ENCODE measurements at regions of chr2 and their contacts with region 1.

Region 1: GRCh38 chr2:64052468-64053241 is 33.4 kb upstream of the VPS54 start:
- DNase-seq: no peak
- ATAC-seq: no peak
- H3K4me3 ChIP-seq: no peak overlapping the region
- H3K27ac ChIP-seq: no peak overlapping the region
- H3K4me1 ChIP-seq: peaks cover 25% of the 10 kb centered on the region
- H3K27me3 ChIP-seq: no peaks in the 10 kb centered on the region
- CTCF ChIP-seq: no peak
- EP300 ChIP-seq: no peak
- POLR2A ChIP-seq: no peak
- RAD21 ChIP-seq: no peak

Region 2: GRCh38 chr2:63841254-63842022 is 211.2 kb before region 1 on chr2 and contains the start of gene UGP2:
- CTCF ChIA-PET with region 1: no interaction called
- POLR2A ChIA-PET with region 1: no interaction called
- RAD21 ChIA-PET with region 1: no interaction called
- SMC1A ChIA-PET with region 1: no interaction called
- in situ Hi-C with region 1: no loop called
- intact Hi-C with region 1: no loop called
- DNase-seq: peak; percentile 62
- ATAC-seq: peak; percentile 85
- H3K4me3 ChIP-seq: peak within 1 kb of the TSS; percentile 73
- H3K27ac ChIP-seq: peak within 1 kb of the TSS; percentile 98
- H3K4me1 ChIP-seq: no peaks in the 10 kb centered on the region
- H3K27me3 ChIP-seq: no peaks in the 10 kb centered on the region
- CTCF ChIP-seq: peak in 2 of 3 experiments; percentile 9 to 27; a peak in 1 of 6 replicates
- EP300 ChIP-seq: 0 out of 4 replicates have a peak, but pooled peaks of 1 of the 2 experiments have one; percentile 20
- POLR2A ChIP-seq: peak; percentile 77
- RAD21 ChIP-seq: no peak
- polyA plus RNA-seq, gene UGP2: 81.0 to 89.0 TPM

Region 3: DNA sequence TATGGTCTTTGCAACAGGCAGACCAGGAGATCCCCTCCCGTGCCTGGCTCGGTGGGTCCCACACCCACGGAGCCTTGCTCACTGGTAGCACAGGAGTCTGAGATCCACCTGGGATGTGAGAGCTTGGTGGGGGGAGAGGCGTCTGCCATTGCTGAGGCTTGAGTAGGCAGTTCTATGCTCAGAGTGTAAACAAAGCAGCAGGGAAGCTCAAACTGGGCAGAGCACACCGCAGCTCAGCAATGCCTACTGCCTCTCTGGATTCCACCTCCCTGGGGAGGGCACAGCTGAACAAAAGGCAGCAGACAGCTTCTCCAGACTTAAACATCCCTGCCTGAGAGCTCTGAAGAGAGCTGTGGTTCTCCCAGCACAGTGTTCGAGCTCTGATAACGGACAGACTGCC is 125.9 kb before region 1 on chr2:
- CTCF ChIA-PET with region 1: no interaction called
- POLR2A ChIA-PET with region 1: no interaction called
- RAD21 ChIA-PET with region 1: no interaction called
- SMC1A ChIA-PET with region 1: no interaction called
- in situ Hi-C with region 1: no loop called
- intact Hi-C with region 1: no loop called
- DNase-seq: no peak
- ATAC-seq: no peak
- H3K4me3 ChIP-seq: no peak overlapping the region
- H3K27ac ChIP-seq: no peak overlapping the region
- H3K4me1 ChIP-seq: no peaks in the 10 kb centered on the region
- H3K27me3 ChIP-seq: no peaks in the 10 kb centered on the region
- CTCF ChIP-seq: no peak
- EP300 ChIP-seq: no peak
- POLR2A ChIP-seq: no peak
- RAD21 ChIP-seq: no peak

Region 4: DNA sequence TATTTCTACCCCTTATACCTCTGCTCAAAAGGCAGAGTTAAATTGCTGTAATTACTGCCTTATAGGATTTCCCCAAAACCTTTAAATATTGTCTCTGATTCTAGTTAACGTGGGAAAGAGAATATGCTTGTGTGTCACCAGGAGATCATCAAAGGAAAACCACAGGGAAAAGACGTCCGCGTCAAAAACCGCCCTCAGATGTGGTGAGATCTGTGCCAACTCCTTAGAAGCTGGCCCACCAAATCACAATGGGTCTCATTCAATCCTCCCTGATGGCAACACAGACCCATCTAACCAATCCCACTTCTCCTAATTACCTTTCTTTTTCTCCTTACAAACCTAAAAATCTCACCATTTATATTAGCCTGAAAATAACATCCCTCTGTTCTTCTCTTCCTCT is 58.8 kb before region 1 on chr2:
- CTCF ChIA-PET with region 1: no interaction called
- POLR2A ChIA-PET with region 1: no interaction called
- RAD21 ChIA-PET with region 1: no interaction called
- SMC1A ChIA-PET with region 1: no interaction called
- in situ Hi-C with region 1: no loop called
- intact Hi-C with region 1: no loop called
- DNase-seq: no peak
- ATAC-seq: no peak
- H3K4me3 ChIP-seq: no peak overlapping the region
- H3K27ac ChIP-seq: no peak overlapping the region
- H3K4me1 ChIP-seq: no peaks in the 10 kb centered on the region
- H3K27me3 ChIP-seq: no peaks in the 10 kb centered on the region
- CTCF ChIP-seq: no peak
- EP300 ChIP-seq: no peak
- POLR2A ChIP-seq: no peak
- RAD21 ChIP-seq: no peak

Region 5: GRCh38 chr2:64101141-64101591 is 48.5 kb after region 1 on chr2:
- CTCF ChIA-PET with region 1: interaction called, 12 read pairs
- POLR2A ChIA-PET with region 1: no interaction called
- RAD21 ChIA-PET with region 1: interaction called, 10 read pairs
- SMC1A ChIA-PET with region 1: interaction called, 11 read pairs
- in situ Hi-C with region 1: no loop called
- intact Hi-C with region 1: no loop called
- DNase-seq: no peak
- ATAC-seq: peak; percentile 68
- H3K4me3 ChIP-seq: peak overlapping the region; percentile 26; the same call in 1 of the 2 replicates
- H3K27ac ChIP-seq: peak overlapping the region; percentile 80
- H3K4me1 ChIP-seq: peaks cover 46% of the 10 kb centered on the region
- H3K27me3 ChIP-seq: no peaks in the 10 kb centered on the region
- CTCF ChIP-seq: no peak
- EP300 ChIP-seq: no peak
- POLR2A ChIP-seq: no peak
- RAD21 ChIP-seq: no peak

Region 6: DNA sequence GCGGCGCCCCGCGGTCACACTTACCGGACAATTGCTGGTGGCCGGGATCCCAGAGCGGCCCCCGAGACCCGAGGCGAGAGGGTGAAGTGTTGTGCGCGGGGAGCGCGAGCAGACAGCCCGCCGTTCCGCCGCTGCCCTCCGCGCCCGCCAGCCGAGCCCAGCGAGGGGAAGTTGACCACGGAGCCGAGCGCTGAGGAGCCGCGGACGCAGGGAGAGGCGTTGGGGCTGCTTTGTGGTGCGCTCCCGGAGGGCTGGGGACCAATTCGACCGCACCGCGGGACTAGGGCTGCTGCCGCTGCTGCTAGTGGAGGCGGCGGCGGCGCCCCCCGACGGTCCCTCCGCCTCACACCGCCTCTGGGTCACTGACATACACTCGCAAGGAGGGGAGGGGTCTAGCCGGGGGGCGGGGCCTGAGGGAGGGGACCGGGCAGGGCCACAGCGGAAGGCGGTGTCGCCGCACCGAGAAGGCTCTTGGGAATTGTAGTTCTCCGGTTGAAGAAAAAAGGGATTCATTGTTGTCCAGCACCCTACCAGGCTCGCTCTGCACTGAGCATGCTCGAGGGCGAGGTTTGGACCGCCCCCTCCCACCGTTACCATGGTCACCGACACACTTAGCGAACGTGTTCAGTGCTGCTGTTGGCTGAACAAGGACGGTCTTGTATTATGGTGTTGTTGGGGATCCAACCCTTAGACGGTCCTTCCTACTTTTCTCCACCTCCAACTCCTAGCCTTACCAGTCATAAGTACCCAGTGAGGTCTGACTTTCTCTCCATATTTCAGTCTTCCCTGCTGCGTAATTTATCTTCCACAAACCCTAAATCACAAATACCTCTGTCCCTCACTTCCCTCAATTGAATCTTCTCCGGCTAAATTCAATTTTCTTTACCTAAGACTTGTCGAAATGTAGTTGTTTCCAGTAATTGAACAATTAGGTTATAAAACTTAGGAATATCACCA is 91.7 kb after region 1 on chr2 and contains the start of gene PELI1:
- CTCF ChIA-PET with region 1: interaction called, 12 read pairs
- POLR2A ChIA-PET with region 1: interaction called, 5 read pairs
- RAD21 ChIA-PET with region 1: interaction called, 17 read pairs
- SMC1A ChIA-PET with region 1: interaction called, 13 read pairs
- in situ Hi-C with region 1: no loop called
- intact Hi-C with region 1: loop called (anchors 2 kb)
- DNase-seq: peak; percentile 96
- ATAC-seq: peak; percentile 86
- H3K4me3 ChIP-seq: peak within 1 kb of the TSS; percentile 95
- H3K27ac ChIP-seq: peak within 1 kb of the TSS; percentile 85
- H3K4me1 ChIP-seq: peaks cover 3% of the 10 kb centered on the region
- H3K27me3 ChIP-seq: no peaks in the 10 kb centered on the region
- CTCF ChIP-seq: peak; percentile 13 to 49 (median 34); a peak in 3 of 6 replicates
- EP300 ChIP-seq: no peak
- POLR2A ChIP-seq: peak; percentile 97
- RAD21 ChIP-seq: peak; percentile 36; the same call in 1 of the 2 replicates
- polyA plus RNA-seq, gene PELI1: 12.1 to 13.2 TPM

Region 7: DNA sequence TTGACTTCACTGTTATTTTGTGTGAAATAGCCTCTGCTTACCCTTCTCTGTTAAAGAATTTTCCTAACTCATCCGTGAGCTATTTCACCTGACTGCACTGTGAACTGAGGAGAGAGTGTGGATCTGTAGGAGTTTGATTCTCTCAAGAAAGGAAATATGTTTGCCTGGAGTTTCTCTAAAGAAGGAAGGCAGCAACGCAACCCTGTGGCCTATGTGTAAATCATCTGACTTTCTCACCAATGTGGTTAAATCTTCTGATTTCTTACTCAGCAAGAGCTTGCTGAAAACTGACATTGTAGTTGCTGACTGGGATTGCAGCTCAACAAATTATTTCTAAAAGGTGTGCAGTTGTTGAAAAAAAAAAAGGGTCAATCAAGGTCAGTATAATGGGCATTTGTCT is 245.5 kb after region 1 on chr2:
- CTCF ChIA-PET with region 1: interaction called, 12 read pairs
- POLR2A ChIA-PET with region 1: interaction called, 3 read pairs
- RAD21 ChIA-PET with region 1: interaction called, 10 read pairs
- SMC1A ChIA-PET with region 1: interaction called, 13 read pairs
- in situ Hi-C with region 1: no loop called
- intact Hi-C with region 1: no loop called
- DNase-seq: no peak
- ATAC-seq: no peak
- H3K4me3 ChIP-seq: no peak overlapping the region
- H3K27ac ChIP-seq: no peak overlapping the region
- H3K4me1 ChIP-seq: peaks cover 14% of the 10 kb centered on the region
- H3K27me3 ChIP-seq: no peaks in the 10 kb centered on the region
- CTCF ChIP-seq: no peak
- EP300 ChIP-seq: no peak
- POLR2A ChIP-seq: no peak
- RAD21 ChIP-seq: no peak

Region 8: DNA sequence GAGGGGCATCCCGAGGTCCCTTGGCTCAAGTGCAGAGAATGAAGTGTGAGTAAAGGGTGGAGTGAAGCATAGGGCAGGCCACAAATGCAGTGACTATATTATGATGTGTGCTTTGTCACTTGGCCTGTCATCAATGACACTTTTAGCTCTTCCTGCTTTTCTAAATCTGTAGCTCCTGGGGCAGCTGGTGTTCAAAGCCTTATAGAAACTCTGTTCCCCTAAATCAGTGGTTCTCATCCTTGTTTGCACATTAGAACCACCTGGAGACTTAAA is 265.8 kb after region 1 on chr2:
- CTCF ChIA-PET with region 1: interaction called, 49 read pairs
- POLR2A ChIA-PET with region 1: no interaction called
- RAD21 ChIA-PET with region 1: interaction called, 82 read pairs
- SMC1A ChIA-PET with region 1: interaction called, 54 read pairs
- in situ Hi-C with region 1: no loop called
- intact Hi-C with region 1: no loop called
- DNase-seq: no peak
- ATAC-seq: peak; percentile 83
- H3K4me3 ChIP-seq: no peak overlapping the region
- H3K27ac ChIP-seq: no peak overlapping the region
- H3K4me1 ChIP-seq: peaks cover 13% of the 10 kb centered on the region
- H3K27me3 ChIP-seq: no peaks in the 10 kb centered on the region
- CTCF ChIP-seq: no peak
- EP300 ChIP-seq: 0 out of 4 replicates have a peak, but pooled peaks of 1 of the 2 experiments have one; percentile 13
- POLR2A ChIP-seq: no peak
- RAD21 ChIP-seq: no peak

Region 9: DNA sequence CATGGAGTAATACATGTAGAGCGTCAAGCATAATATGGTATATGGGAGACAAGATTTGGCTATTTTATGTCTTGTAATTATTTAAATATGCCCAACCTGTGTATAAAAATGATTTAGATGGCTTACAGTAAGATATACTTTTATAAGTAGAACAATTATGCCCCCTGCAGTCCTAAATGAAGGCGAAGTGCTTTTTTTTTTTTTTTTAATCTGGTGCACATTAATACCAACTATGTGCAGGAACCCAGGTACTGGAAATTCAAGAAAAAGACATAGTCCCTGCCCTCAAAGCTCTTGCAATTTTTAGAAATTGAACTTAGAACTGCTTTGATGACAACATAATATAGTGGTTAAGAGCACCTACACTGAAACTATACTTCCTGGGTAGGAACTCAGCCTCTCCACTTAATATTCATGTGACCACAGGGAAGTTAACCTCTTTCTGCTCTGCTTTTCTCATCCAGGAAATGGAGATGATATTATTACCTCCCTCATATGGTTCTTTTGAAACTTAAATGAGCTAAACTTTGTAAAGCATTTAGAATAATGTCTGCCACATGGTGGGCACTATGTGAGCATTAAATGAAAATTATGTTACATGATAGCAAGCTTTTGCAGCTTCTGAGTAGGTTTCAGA is 509.6 kb after region 1 on chr2:
- CTCF ChIA-PET with region 1: interaction called, 5 read pairs
- POLR2A ChIA-PET with region 1: no interaction called
- RAD21 ChIA-PET with region 1: no interaction called
- SMC1A ChIA-PET with region 1: no interaction called
- in situ Hi-C with region 1: no loop called
- intact Hi-C with region 1: loop called (anchors 2 kb)
- DNase-seq: no peak
- ATAC-seq: peak; percentile 70
- H3K4me3 ChIP-seq: no peak overlapping the region
- H3K27ac ChIP-seq: no peak overlapping the region
- H3K4me1 ChIP-seq: peaks cover 19% of the 10 kb centered on the region
- H3K27me3 ChIP-seq: no peaks in the 10 kb centered on the region
- CTCF ChIP-seq: peak; percentile 15 to 52 (median 39); a peak in 5 of 6 replicates
- EP300 ChIP-seq: no peak
- POLR2A ChIP-seq: no peak
- RAD21 ChIP-seq: peak; percentile 58

Measured in GM12878 (cell line).